HepG2 (cell line): ENCODE measurements at regions of chr17 and their contacts with region 1.

Region 1: GRCh38 chr17:77280980-77281903 is 140.5 kb downstream of the SEC14L1 start:
- DNase-seq: peak; percentile 65
- ATAC-seq: peak; percentile 55
- H3K4me3 ChIP-seq: peak overlapping the region; percentile 85 to 99 (median 97)
- H3K27ac ChIP-seq: peak overlapping the region; percentile 98
- H3K4me1 ChIP-seq: peaks cover 48% of the 10 kb centered on the region
- H3K27me3 ChIP-seq: no peaks in the 10 kb centered on the region; a peak in 1 of 5 replicates
- CTCF ChIP-seq: peak; percentile 55
- EP300 ChIP-seq: no peak; a peak in 1 of 4 replicates
- POLR2A ChIP-seq: peak in 1 of 2 experiments; percentile 44; a peak in 2 of 4 replicates
- RAD21 ChIP-seq: peak; percentile 94

Region 2: DNA sequence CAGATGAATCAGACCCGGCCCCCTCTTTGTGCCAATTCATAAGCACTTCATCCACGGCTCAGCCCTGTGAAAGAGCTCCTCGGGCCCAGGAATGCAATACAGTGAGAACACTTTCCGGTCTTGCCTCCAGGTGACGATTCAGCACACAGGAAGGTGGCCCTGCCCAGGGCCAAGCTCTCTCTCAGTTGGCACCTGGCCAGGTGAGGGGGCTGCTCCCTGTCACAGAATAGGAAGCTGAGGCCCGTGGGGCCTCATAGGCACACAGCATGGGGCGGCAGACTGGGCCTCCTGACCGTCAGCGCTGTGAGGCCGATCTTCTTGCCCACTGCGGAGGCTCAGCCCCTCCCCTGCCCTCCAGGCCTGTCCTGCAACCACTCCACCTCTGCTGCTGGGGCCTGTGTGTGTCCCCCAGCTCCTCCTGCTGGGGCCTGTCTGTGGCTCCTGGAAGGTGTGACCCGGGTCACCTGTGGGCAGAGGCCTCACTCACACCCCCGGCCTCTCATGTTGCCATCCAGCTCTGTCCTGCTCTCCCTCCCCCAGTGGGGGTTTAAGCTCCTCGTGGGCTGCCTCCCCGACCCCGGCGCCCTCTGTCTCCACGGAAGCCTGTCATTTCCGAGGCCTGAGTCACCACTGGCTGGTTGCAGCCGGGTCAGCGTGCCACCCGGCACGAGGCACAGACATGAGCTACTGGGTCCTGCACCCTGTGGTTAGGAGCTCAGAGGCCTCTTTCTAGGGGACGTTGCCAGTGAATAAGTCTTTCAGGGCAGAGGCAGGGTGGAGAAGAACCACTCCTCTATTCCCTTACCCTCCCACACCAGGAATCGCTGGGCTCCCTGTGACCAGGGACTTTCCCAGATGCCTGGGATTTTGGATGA is 26.1 kb before region 1 on chr17:
- CTCF ChIA-PET with region 1: no interaction called
- POLR2A ChIA-PET with region 1: interaction called, 23 read pairs
- in situ Hi-C with region 1: no loop called
- intact Hi-C with region 1: no loop called
- DNase-seq: peak; percentile 73
- ATAC-seq: peak; percentile 85
- H3K4me3 ChIP-seq: peak overlapping the region; percentile 19 to 68 (median 38)
- H3K27ac ChIP-seq: no peak overlapping the region
- H3K4me1 ChIP-seq: peaks cover 32% of the 10 kb centered on the region
- H3K27me3 ChIP-seq: peaks cover 6 to 74% of the 10 kb centered on the region in 2 experiments; a peak in 4 of 5 replicates
- CTCF ChIP-seq: 0 out of 2 replicates have a peak, but pooled peaks have one; percentile 8
- EP300 ChIP-seq: peak; percentile 31 to 43; a peak in 2 of 4 replicates
- POLR2A ChIP-seq: no peak
- RAD21 ChIP-seq: peak; percentile 31

Region 3: DNA sequence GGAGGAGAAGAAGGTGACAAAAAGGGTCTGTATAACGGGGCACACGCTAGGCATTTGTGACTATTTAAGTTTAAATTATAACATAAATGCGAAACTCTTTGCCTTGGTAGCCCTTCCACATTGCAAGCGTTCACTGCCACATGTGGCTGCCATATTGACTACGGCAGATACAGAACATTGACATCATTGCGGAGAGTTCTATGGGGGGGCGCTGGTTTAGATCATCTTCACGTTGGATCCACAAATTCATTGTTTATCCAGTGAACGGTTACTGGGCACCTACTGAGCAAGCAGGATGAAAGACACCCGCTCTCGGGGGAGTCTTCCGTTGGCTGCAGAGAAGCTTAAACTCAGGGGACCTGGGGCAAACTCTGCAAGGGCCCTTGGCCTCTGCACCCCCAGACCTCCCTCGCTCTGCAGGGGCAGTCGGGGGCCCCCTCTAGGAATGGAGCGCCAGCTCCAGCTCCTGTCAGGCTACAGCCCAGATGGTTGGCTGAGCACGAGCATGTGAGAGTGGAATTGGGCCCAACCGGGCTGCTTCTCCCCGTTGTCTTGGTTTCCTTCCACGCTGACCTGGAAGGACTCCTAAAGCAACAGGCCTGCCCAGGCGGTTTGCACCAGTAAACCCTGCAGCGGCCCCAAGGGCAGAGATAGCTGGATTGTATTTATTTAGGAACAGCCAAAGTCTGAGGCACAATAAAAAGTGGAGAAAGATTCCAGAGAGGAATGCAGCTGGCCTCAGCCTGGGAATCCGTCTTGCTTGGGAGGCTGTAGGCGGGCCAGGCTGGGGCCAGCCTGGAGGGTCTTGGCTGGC is 31.8 kb after region 1 on chr17:
- CTCF ChIA-PET with region 1: no interaction called
- POLR2A ChIA-PET with region 1: interaction called, 80 read pairs
- in situ Hi-C with region 1: no loop called
- intact Hi-C with region 1: no loop called
- DNase-seq: peak; percentile 66
- ATAC-seq: peak; percentile 70
- H3K4me3 ChIP-seq: no peak overlapping the region
- H3K27ac ChIP-seq: peak overlapping the region; percentile 50
- H3K4me1 ChIP-seq: peaks cover 56% of the 10 kb centered on the region
- H3K27me3 ChIP-seq: no peaks in the 10 kb centered on the region
- CTCF ChIP-seq: 0 out of 2 replicates have a peak, but pooled peaks have one; percentile 16
- EP300 ChIP-seq: no peak
- POLR2A ChIP-seq: no peak
- RAD21 ChIP-seq: no peak

Region 4: DNA sequence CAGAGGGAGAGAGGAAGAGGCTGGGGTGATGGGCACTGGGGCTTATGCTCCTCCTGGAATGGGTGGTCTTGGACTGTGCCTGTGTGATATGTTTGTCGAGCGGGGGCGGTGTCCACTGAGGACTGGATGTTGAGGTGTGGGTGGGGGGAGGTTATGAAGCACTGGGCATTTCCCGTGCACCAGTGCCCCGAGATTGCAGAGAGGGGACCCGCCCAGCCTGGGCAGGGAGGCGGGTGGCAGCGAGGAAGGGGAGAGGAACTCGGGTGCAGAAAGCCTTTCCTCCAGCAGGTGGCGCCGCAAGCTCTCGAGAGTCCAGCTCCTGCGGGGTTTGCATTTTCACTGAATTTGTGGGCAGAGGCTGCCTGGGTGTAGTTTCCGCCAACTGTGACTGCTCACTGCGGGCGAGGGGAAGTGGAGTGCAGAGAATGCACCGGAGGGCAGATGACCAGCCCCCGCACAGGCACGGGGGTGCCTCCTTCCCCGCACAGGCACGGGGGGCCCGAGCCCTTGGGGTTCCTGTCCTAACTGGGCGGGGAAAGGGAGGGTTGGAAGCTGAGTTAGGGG is 50.1 kb after region 1 on chr17:
- CTCF ChIA-PET with region 1: no interaction called
- POLR2A ChIA-PET with region 1: interaction called, 15 read pairs
- in situ Hi-C with region 1: no loop called
- intact Hi-C with region 1: no loop called
- DNase-seq: peak; percentile 84
- ATAC-seq: peak; percentile 85
- H3K4me3 ChIP-seq: peak overlapping the region in 1 of 3 experiments; percentile 35; a peak in 1 of 6 replicates
- H3K27ac ChIP-seq: no peak overlapping the region
- H3K4me1 ChIP-seq: peaks cover 49% of the 10 kb centered on the region
- H3K27me3 ChIP-seq: no peaks in the 10 kb centered on the region
- CTCF ChIP-seq: peak; percentile 99
- EP300 ChIP-seq: no peak
- POLR2A ChIP-seq: no peak
- RAD21 ChIP-seq: peak; percentile 99

Region 5: GRCh38 chr17:77372444-77373298 is 91.4 kb after region 1 on chr17:
- CTCF ChIA-PET with region 1: no interaction called
- POLR2A ChIA-PET with region 1: interaction called, 20 read pairs
- in situ Hi-C with region 1: loop called (anchors 10 kb)
- intact Hi-C with region 1: loop called (anchors 5 kb)
- DNase-seq: peak; percentile 94
- ATAC-seq: peak; percentile 75
- H3K4me3 ChIP-seq: peak overlapping the region; percentile 76 to 91 (median 88); a peak in 5 of 6 replicates
- H3K27ac ChIP-seq: peak overlapping the region; percentile 71
- H3K4me1 ChIP-seq: peaks cover 65% of the 10 kb centered on the region
- H3K27me3 ChIP-seq: no peaks in the 10 kb centered on the region
- CTCF ChIP-seq: peak; percentile 63
- EP300 ChIP-seq: peak in 1 of 2 experiments; percentile 37; a peak in 1 of 4 replicates
- POLR2A ChIP-seq: no peak; a peak in 1 of 4 replicates
- RAD21 ChIP-seq: peak; percentile 55

Region 6: GRCh38 chr17:77429919-77430752 is 148.9 kb after region 1 on chr17:
- CTCF ChIA-PET with region 1: no interaction called
- POLR2A ChIA-PET with region 1: interaction called, 12 read pairs
- in situ Hi-C with region 1: no loop called
- intact Hi-C with region 1: no loop called
- DNase-seq: peak; percentile 97
- ATAC-seq: peak; percentile 79
- H3K4me3 ChIP-seq: peak overlapping the region in 1 of 3 experiments; percentile 0; a peak in 1 of 6 replicates
- H3K27ac ChIP-seq: peak overlapping the region; percentile 61
- H3K4me1 ChIP-seq: peaks cover 50% of the 10 kb centered on the region
- H3K27me3 ChIP-seq: no peaks in the 10 kb centered on the region
- CTCF ChIP-seq: peak; percentile 96
- EP300 ChIP-seq: peak in 1 of 2 experiments; percentile 49; a peak in 1 of 4 replicates
- POLR2A ChIP-seq: no peak
- RAD21 ChIP-seq: peak; percentile 97